Naive thymus-derived CD8-positive, alpha-beta T cell (primary cell): ENCODE measurements at regions of chr4 and their contacts with region 1.

Region 1: DNA sequence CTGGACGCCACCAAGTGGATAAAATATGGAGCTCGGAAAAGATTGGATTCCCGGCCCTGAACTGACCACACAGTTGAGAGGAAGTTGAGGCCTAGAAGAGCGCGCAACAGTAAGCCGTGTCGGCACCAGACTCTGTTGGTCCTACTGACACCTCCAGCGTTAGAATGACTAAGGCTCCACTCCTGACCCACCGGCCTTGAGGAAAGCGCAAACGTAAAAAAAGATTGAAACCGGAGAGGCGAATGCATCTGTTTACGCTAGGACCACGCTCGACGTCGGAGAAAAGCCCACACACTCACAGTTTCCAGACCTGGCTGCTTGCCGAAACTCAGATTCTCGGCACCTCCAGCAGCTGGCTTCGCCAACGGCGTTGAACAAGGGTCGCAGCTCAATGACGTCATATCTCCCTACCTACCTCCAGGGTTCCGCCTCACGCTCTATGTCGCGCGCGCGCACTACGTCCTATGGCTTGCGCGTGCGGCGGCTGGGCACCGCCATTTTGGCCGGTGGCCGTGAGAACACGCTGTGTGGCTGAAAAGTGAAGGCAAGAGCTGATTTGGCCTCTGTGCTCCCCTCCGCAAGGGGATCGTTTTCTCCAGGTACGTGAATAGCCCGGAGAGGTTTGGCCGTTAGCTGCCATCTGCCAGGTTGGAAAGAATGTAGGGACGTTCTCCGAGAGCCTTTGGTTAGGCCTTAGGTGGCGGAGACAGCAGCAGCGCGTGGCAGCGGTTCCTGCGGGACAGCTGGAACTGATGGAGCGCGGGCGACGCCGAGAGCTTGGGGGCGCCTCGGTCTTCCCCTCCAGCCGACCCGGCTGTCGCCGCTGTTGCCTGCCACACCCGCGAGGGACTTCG is at the starts of genes ABCE1 and ANAPC10:
- DNase-seq: peak; percentile 88 to 98 (median 94)
- ATAC-seq: peak; percentile 90 to 92
- H3K4me3 Mint-ChIP-seq: peak within 1 kb of the TSS; percentile 91 to 98 (median 96)
- H3K27ac Mint-ChIP-seq: peak within 1 kb of the TSS; percentile 94 to 99 (median 98)
- H3K4me1 Mint-ChIP-seq: peaks cover 17 to 48% (median 37%) of the 10 kb centered on the region in 4 donors
- H3K27me3 Mint-ChIP-seq: no peaks in the 10 kb centered on the region
- polyA plus RNA-seq, gene ABCE1: 59.4 to 72.9 (median 68.5) TPM
- polyA plus RNA-seq, gene ANAPC10: 33.3 to 38.5 (median 35.8) TPM

Region 2: DNA sequence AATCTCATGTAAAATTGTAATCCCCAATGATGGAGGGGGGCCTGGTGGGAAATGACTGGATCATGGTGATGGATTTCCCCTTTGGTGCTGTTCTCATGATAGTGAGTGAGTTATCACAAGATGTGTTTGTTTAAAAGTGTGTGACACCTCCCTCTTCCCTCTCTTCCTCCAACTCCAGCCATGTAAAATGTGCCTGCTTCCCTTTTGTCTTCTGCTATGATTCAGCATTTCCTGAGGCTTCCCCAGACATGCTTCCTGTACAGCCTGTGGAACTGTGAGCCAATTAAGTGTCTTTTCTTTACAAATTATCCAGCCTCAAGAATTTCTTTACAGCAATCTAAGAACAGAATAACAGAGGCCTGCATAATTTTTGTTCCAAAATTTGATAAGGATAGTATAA is 85.2 kb before region 1 on chr4:
- POLR2A ChIA-PET with region 1: no interaction called
- DNase-seq: no peak
- ATAC-seq: no peak
- H3K4me3 Mint-ChIP-seq: no peak overlapping the region
- H3K27ac Mint-ChIP-seq: peak overlapping the region in 2 of 10 donors; percentile 7 to 31
- H3K4me1 Mint-ChIP-seq: peaks cover 15 to 39% (median 28%) of the 10 kb centered on the region in 4 donors
- H3K27me3 Mint-ChIP-seq: no peaks in the 10 kb centered on the region

Region 3: GRCh38 chr4:145041378-145041777 is 56.7 kb before region 1 on chr4:
- POLR2A ChIA-PET with region 1: no interaction called
- DNase-seq: no peak
- ATAC-seq: no peak
- H3K4me3 Mint-ChIP-seq: no peak overlapping the region
- H3K27ac Mint-ChIP-seq: no peak overlapping the region
- H3K4me1 Mint-ChIP-seq: peaks cover 0 to 5% (median 4%) of the 10 kb centered on the region in 4 donors
- H3K27me3 Mint-ChIP-seq: no peaks in the 10 kb centered on the region

Region 4: DNA sequence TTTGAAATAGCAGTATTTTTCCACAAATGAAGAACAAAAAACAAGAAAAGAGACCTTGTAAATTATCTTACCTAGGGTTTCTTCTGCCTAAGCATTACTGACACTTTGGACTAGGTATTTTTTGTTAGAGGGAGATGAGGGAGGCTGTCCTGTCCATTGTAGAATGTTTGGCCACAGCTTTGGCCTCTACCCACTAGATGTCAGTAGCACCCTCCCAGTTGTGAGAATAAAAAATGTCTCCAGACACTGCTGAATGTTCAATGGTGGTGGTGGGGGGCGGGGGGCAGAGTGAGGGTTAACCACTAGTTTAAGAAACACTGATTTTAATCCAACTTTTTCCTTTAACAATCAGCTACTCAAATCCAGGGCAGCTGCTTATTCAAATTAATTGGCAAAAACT is 56.5 kb after region 1 on chr4:
- POLR2A ChIA-PET with region 1: no interaction called
- DNase-seq: no peak
- ATAC-seq: no peak
- H3K4me3 Mint-ChIP-seq: no peak overlapping the region
- H3K27ac Mint-ChIP-seq: peak overlapping the region in 2 of 10 donors; percentile 34 to 39
- H3K4me1 Mint-ChIP-seq: peaks cover 0 to 12% (median 6%) of the 10 kb centered on the region in 4 donors
- H3K27me3 Mint-ChIP-seq: no peaks in the 10 kb centered on the region

Region 5: GRCh38 chr4:145180298-145181090 is 82.4 kb after region 1 on chr4 and contains the start of gene OTUD4:
- POLR2A ChIA-PET with region 1: interaction called, 23 read pairs
- DNase-seq: peak; percentile 92 to 97 (median 96)
- ATAC-seq: peak; percentile 80 to 84
- H3K4me3 Mint-ChIP-seq: peak within 1 kb of the TSS; percentile 83 to 96 (median 92)
- H3K27ac Mint-ChIP-seq: peak within 1 kb of the TSS; percentile 90 to 98 (median 97)
- H3K4me1 Mint-ChIP-seq: peaks cover 16 to 47% (median 33%) of the 10 kb centered on the region in 4 donors
- H3K27me3 Mint-ChIP-seq: peaks cover 0 to 2% (median 0%) of the 10 kb centered on the region in 5 donors
- polyA plus RNA-seq, gene OTUD4: 14.7 to 17.9 (median 14.9) TPM